ENCODE measurements at regions of chr11 and their contacts with region 1.

Region 1: DNA sequence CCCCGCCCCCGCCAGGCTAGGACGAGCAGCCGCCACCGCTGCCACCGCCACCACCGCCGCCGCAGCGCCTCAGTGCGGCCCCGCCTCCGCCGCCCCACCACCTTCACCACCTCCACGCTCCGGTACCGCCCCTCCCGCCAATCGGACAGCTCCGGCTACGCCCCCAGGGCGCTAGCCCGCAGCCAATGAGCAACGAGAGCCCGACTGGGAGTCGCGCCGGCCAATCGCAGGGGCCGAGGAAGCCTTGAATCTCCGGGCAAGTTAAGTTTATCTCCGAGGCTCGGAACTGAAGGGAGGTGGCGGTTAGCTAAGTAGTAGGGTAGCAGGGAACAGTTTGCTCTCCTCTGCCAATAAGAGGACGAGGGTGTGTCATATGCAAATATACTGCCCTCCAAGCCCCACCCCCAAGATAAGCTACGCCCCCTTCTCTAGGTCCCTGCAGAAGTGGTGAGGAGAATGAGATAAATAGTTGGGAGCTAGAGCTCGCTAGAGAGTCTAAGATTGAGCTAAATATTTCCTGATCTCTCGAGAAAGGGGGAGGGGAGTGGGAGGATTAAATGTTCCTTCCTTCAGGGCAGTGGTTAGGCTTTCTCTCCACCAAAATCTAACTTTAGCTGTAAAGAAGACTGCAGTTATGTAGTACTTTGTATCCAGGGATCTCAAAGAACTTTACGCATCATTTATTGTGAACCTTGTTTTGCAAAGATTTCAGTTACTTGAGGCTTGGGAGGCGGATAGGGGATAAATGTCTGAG is at the start of gene SESN3:
- DNase-seq: peak; percentile 99
- H3K4me3 ChIP-seq: peak within 1 kb of the TSS; percentile 81 to 89
- H3K4me3 Mint-ChIP-seq: peak within 1 kb of the TSS; percentile 92 to 99 (median 97)
- H3K27ac ChIP-seq: peak within 1 kb of the TSS; percentile 68
- H3K27ac Mint-ChIP-seq: peak within 1 kb of the TSS; percentile 85 to 96 (median 93)
- H3K4me1 ChIP-seq: peaks cover 50% of the 10 kb centered on the region
- H3K4me1 Mint-ChIP-seq: peaks cover 28 to 59% (median 34%) of the 10 kb centered on the region in 4 donors
- H3K27me3 ChIP-seq: no peaks in the 10 kb centered on the region
- H3K27me3 Mint-ChIP-seq: no peaks in the 10 kb centered on the region
- total RNA-seq, gene SESN3: 204 to 211 TPM

Region 2: GRCh38 chr11:94786264-94787126 is 444.8 kb before region 1 on chr11:
- CTCF ChIA-PET with region 1: no interaction called
- POLR2A ChIA-PET with region 1: no interaction called
- intact Hi-C with region 1: no loop called
- DNase-seq: peak in 3 of 5 donors; percentile 15 to 21 (median 16)
- H3K4me3 ChIP-seq: no peak overlapping the region
- H3K4me3 Mint-ChIP-seq: no peak overlapping the region
- H3K27ac ChIP-seq: no peak overlapping the region
- H3K27ac Mint-ChIP-seq: no peak overlapping the region
- H3K4me1 ChIP-seq: no peaks in the 10 kb centered on the region
- H3K4me1 Mint-ChIP-seq: no peaks in the 10 kb centered on the region
- H3K27me3 ChIP-seq: peaks cover 4% of the 10 kb centered on the region
- H3K27me3 Mint-ChIP-seq: peaks cover 9 to 11% of the 10 kb centered on the region in 2 donors

Region 3: DNA sequence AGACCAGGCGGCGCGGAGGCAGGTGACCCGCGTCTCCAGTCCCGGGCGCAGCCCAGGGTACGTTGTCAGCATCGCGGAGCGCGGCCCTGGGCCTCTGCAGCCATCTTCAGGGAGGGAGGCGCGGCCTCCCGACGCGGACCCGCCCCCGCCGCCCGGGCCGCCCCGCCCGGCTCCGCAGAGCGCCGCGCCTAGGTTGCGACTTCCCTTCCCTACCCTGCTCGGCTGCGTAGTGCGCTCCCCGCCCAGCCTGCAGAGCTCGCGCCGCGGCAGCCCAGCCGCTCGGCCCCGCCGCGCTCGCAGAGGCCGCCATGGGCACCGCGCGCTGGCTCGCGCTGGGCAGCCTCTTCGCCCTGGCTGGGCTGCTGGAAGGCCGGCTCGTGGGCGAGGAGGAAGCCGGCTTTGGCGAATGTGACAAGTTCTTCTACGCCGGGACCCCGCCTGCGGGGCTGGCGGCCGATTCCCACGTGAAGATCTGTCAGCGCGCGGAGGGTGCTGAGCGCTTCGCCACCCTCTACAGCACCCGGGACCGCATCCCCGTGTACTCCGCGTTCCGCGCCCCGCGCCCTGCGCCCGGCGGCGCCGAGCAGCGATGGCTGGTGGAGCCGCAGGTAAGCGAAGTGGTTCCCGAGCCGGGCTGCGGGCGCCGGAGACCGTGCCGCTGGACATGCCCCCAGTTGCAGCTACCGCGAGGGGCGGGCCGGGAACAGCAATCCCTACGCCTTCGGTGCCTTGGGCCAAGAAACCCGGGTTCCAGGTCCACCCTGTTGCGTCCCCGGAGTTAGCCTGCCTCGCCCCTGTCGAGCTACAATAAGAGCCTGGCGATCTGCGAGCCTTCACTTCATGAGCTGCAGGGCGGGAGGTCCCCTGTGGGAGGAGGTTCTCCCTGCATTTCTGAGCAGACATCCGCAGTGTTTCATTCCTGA is 141.4 kb before region 1 on chr11 and contains the start of gene ENDOD1:
- CTCF ChIA-PET with region 1: no interaction called
- POLR2A ChIA-PET with region 1: interaction called, 33 read pairs
- intact Hi-C with region 1: loop called (anchors 1 kb)
- DNase-seq: peak; percentile 86 to 89 (median 87)
- H3K4me3 ChIP-seq: peak within 1 kb of the TSS; percentile 45 to 76
- H3K4me3 Mint-ChIP-seq: peak within 1 kb of the TSS; percentile 91 to 96 (median 92)
- H3K27ac ChIP-seq: peak within 1 kb of the TSS; percentile 67
- H3K27ac Mint-ChIP-seq: peak within 1 kb of the TSS; percentile 92 to 99 (median 98)
- H3K4me1 ChIP-seq: peaks cover 43% of the 10 kb centered on the region
- H3K4me1 Mint-ChIP-seq: peaks cover 36 to 55% (median 46%) of the 10 kb centered on the region in 4 donors
- H3K27me3 ChIP-seq: no peaks in the 10 kb centered on the region
- H3K27me3 Mint-ChIP-seq: no peaks in the 10 kb centered on the region
- total RNA-seq, gene ENDOD1: 12.8 to 13.3 TPM

Region 4: DNA sequence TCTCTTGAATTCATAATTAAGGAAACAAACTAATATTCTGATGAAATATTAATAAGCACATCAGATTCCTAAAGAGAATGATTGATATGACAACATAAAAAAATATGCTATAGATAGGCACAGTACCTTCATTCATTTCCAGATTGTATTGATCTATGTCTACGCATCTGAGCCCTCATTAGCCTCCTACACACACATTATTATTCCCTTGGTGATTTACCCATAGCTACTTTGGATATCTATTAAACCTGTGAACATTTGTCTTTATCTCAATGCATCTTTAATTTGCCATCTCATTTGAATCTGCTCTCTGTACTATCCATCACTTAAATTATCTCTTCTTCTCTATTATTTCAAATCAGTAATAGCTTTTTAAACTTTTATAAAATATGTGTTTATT is 18.7 kb before region 1 on chr11:
- CTCF ChIA-PET with region 1: no interaction called
- POLR2A ChIA-PET with region 1: interaction called, 24 read pairs
- intact Hi-C with region 1: loop called (anchors 2 kb)
- DNase-seq: peak in 1 of 5 donors; percentile 13
- H3K4me3 ChIP-seq: no peak overlapping the region
- H3K4me3 Mint-ChIP-seq: no peak overlapping the region
- H3K27ac ChIP-seq: no peak overlapping the region
- H3K27ac Mint-ChIP-seq: no peak overlapping the region
- H3K4me1 ChIP-seq: peaks cover 23% of the 10 kb centered on the region
- H3K4me1 Mint-ChIP-seq: peaks cover 16 to 51% (median 26%) of the 10 kb centered on the region in 4 donors
- H3K27me3 ChIP-seq: no peaks in the 10 kb centered on the region
- H3K27me3 Mint-ChIP-seq: no peaks in the 10 kb centered on the region

Region 5: DNA sequence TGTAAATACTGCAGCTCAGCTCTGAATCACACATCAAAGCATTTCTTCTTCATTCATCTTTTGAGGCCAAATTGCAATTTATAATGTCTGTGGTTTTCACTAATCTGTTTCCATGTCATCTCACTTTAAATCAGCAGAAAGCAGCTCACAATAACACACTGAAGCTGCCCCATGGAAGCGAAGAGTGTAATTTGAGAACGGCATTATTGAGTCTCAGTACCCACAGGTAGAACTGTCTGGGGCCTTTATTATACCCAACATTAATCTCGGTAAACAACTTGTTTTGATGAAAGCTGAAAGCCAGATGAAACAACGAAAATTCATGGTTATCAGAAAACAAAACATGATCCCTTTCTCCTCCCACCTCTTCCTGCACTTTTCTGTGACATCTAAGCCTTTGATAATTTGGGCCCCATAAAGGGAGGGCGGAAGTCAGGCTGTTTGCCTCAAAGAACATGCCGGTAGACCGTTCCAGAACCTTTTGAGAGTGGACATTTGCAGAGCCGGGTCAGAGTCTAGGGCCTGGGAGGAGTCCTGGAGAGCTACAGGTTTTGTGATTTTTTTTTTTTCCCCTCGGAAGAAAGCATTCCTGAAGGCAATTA is 67.9 kb after region 1 on chr11:
- CTCF ChIA-PET with region 1: interaction called, 4 read pairs
- POLR2A ChIA-PET with region 1: interaction called, 23 read pairs
- intact Hi-C with region 1: loop called (anchors 2 kb)
- DNase-seq: peak in 4 of 5 donors; percentile 25 to 30 (median 29)
- H3K4me3 ChIP-seq: no peak overlapping the region
- H3K4me3 Mint-ChIP-seq: peak overlapping the region; percentile 39 to 72 (median 66)
- H3K27ac ChIP-seq: no peak overlapping the region
- H3K27ac Mint-ChIP-seq: peak overlapping the region; percentile 19 to 90 (median 55)
- H3K4me1 ChIP-seq: peaks cover 20% of the 10 kb centered on the region
- H3K4me1 Mint-ChIP-seq: peaks cover 26 to 31% (median 26%) of the 10 kb centered on the region in 4 donors
- H3K27me3 ChIP-seq: no peaks in the 10 kb centered on the region
- H3K27me3 Mint-ChIP-seq: no peaks in the 10 kb centered on the region

Region 6: DNA sequence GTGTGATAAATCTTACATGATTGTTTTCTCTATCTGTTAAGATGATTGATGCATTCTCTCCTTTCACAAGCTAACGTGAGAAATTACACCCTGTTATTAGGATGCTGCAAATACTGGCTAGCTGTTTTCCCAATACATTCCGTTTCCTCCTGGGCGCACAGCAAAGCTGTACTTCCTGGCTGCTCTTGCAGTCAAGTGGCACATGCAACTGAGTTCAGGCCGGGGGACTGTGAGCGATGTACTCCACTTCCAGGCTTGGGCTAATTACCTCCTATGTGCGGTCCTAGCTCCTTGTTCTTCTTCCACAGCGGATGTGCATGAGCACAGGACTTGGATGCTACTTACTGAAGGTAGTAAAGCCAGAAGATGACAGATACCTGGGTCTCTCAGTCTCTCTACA is 234.6 kb after region 1 on chr11:
- CTCF ChIA-PET with region 1: no interaction called
- POLR2A ChIA-PET with region 1: no interaction called
- intact Hi-C with region 1: no loop called
- DNase-seq: no peak
- H3K4me3 ChIP-seq: no peak overlapping the region
- H3K4me3 Mint-ChIP-seq: no peak overlapping the region
- H3K27ac ChIP-seq: no peak overlapping the region
- H3K27ac Mint-ChIP-seq: no peak overlapping the region
- H3K4me1 ChIP-seq: no peaks in the 10 kb centered on the region
- H3K4me1 Mint-ChIP-seq: peaks cover 0 to 4% (median 0%) of the 10 kb centered on the region in 4 donors
- H3K27me3 ChIP-seq: no peaks in the 10 kb centered on the region
- H3K27me3 Mint-ChIP-seq: peaks cover 0 to 2% of the 10 kb centered on the region in 2 donors

Region 7: GRCh38 chr11:95680169-95680929 is 449.0 kb after region 1 on chr11:
- CTCF ChIA-PET with region 1: interaction called, 3 read pairs
- POLR2A ChIA-PET with region 1: interaction called, 10 read pairs
- intact Hi-C with region 1: no loop called
- DNase-seq: no peak
- H3K4me3 ChIP-seq: no peak overlapping the region
- H3K4me3 Mint-ChIP-seq: peak overlapping the region; percentile 7 to 72 (median 64)
- H3K27ac ChIP-seq: no peak overlapping the region
- H3K27ac Mint-ChIP-seq: peak overlapping the region; percentile 17 to 83 (median 68)
- H3K4me1 ChIP-seq: peaks cover 42% of the 10 kb centered on the region
- H3K4me1 Mint-ChIP-seq: peaks cover 17 to 81% (median 51%) of the 10 kb centered on the region in 4 donors
- H3K27me3 ChIP-seq: no peaks in the 10 kb centered on the region
- H3K27me3 Mint-ChIP-seq: no peaks in the 10 kb centered on the region

Region 8: GRCh38 chr11:95764267-95764898 is 533.1 kb after region 1 on chr11:
- CTCF ChIA-PET with region 1: interaction called, 6 read pairs
- POLR2A ChIA-PET with region 1: interaction called, 3 read pairs
- intact Hi-C with region 1: loop called (anchors 1 kb)
- DNase-seq: peak in 4 of 5 donors; percentile 65 to 69 (median 67)
- H3K4me3 ChIP-seq: no peak overlapping the region
- H3K4me3 Mint-ChIP-seq: no peak overlapping the region
- H3K27ac ChIP-seq: no peak overlapping the region
- H3K27ac Mint-ChIP-seq: no peak overlapping the region
- H3K4me1 ChIP-seq: no peaks in the 10 kb centered on the region
- H3K4me1 Mint-ChIP-seq: no peaks in the 10 kb centered on the region
- H3K27me3 ChIP-seq: no peaks in the 10 kb centered on the region
- H3K27me3 Mint-ChIP-seq: peaks cover 0 to 2% of the 10 kb centered on the region in 2 donors

Measured in CD4-positive, alpha-beta memory T cell (primary cell).